Psoas muscle (tissue), 8 donors: ENCODE measurements at regions of chr2 and their contacts with region 1.

Region 1: GRCh38 chr2:125684256-125684655 is 971.7 kb upstream of the GYPC start:
- DNase-seq: no peak
- ATAC-seq: no peak
- H3K4me3 ChIP-seq: no peak overlapping the region
- H3K27ac ChIP-seq: no peak overlapping the region
- H3K4me1 ChIP-seq: no peaks in the 10 kb centered on the region
- H3K27me3 ChIP-seq: no peaks in the 10 kb centered on the region
- CTCF ChIP-seq: no peak

Region 2: DNA sequence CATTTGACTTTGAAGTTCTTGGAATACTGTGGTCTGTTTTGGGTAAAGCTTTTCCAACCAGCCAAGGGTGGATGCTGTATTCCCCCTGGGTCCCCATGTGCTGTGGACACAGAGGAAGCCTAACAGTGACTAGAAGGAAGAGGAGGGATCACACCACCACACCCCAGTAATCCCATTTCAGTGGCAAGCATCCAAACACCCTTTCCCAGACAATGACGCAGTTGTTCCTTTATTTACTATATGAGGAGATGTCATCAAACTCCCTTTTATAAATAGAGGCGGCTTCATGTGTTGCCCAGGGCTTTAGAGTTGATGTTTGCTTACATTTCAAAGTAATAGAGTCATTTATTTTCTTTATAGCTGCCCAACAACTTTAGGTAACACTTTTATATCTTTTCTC is 12.3 kb after region 1 on chr2:
- intact Hi-C with region 1: loop called in 1 of 2 experiments (anchors 1 kb)
- DNase-seq: no peak
- ATAC-seq: no peak
- H3K4me3 ChIP-seq: no peak overlapping the region
- H3K27ac ChIP-seq: no peak overlapping the region
- H3K4me1 ChIP-seq: no peaks in the 10 kb centered on the region
- H3K27me3 ChIP-seq: no peaks in the 10 kb centered on the region
- CTCF ChIP-seq: no peak

Region 3: GRCh38 chr2:125745514-125745913 is 61.3 kb after region 1 on chr2:
- intact Hi-C with region 1: no loop called
- DNase-seq: no peak
- ATAC-seq: no peak
- H3K4me3 ChIP-seq: no peak overlapping the region
- H3K27ac ChIP-seq: no peak overlapping the region
- H3K4me1 ChIP-seq: no peaks in the 10 kb centered on the region
- H3K27me3 ChIP-seq: no peaks in the 10 kb centered on the region
- CTCF ChIP-seq: no peak

Region 4: GRCh38 chr2:125837128-125837527 is 152.9 kb after region 1 on chr2:
- intact Hi-C with region 1: no loop called
- DNase-seq: no peak
- ATAC-seq: no peak
- H3K4me3 ChIP-seq: no peak overlapping the region
- H3K27ac ChIP-seq: no peak overlapping the region
- H3K4me1 ChIP-seq: no peaks in the 10 kb centered on the region
- H3K27me3 ChIP-seq: no peaks in the 10 kb centered on the region
- CTCF ChIP-seq: no peak